ENCODE measurements at regions of chr9 and their contacts with region 1.

Region 1: GRCh38 chr9:78133751-78134150 is 102.1 kb upstream of the CEP78 start:
- DNase-seq: no peak
- H3K4me3 ChIP-seq: no peak overlapping the region
- H3K27ac ChIP-seq: no peak overlapping the region
- H3K4me1 ChIP-seq: 0 out of 2 replicates have a peak, but pooled peaks cover 4% of the 10 kb centered on the region
- H3K27me3 ChIP-seq: no peaks in the 10 kb centered on the region
- CTCF ChIP-seq: no peak

Region 2: DNA sequence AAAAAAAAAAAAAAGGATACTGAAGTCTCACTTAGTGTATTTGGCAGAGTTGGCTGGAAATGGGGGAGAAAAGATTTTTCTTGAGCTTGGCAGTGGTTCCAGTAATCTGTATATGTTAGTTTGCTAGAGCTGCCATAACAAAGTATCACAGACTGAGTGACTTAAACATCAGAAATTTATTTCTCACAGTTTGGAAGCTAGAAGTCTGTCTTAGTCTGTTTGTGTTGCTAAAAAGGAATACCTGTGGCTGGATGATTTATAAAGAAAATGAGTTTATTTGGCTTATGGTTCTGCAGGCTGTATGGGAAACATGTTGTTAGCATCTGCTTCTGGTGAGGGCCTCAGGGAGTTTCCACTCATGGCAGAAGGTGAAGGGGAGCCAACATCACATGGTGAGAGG is 12.5 kb after region 1 on chr9:
- CTCF ChIA-PET with region 1: no interaction called
- POLR2A ChIA-PET with region 1: interaction called, 25 read pairs
- intact Hi-C with region 1: no loop called
- DNase-seq: no peak
- H3K4me3 ChIP-seq: no peak overlapping the region
- H3K27ac ChIP-seq: no peak overlapping the region
- H3K4me1 ChIP-seq: no peaks in the 10 kb centered on the region
- H3K27me3 ChIP-seq: no peaks in the 10 kb centered on the region
- CTCF ChIP-seq: no peak

Region 3: GRCh38 chr9:78707481-78707991 is 573.8 kb after region 1 on chr9:
- CTCF ChIA-PET with region 1: no interaction called
- POLR2A ChIA-PET with region 1: no interaction called
- intact Hi-C with region 1: no loop called
- DNase-seq: no peak
- H3K4me3 ChIP-seq: no peak overlapping the region
- H3K27ac ChIP-seq: no peak overlapping the region
- H3K4me1 ChIP-seq: 0 out of 2 replicates have a peak, but pooled peaks cover 5% of the 10 kb centered on the region
- H3K27me3 ChIP-seq: peaks cover 7% of the 10 kb centered on the region; the same call in 1 of the 2 replicates
- CTCF ChIP-seq: no peak

Measured in PC-9 (cell line).